ENCODE measurements at regions of chr2 and their contacts with region 1.

Region 1: GRCh38 chr2:133886735-133887660 is 318.7 kb upstream of the NCKAP5 start:
- ATAC-seq: peak; percentile 50 to 88 (median 77)
- H3K4me3 ChIP-seq: no peak overlapping the region
- H3K27ac ChIP-seq: no peak overlapping the region
- H3K4me1 ChIP-seq: peaks cover 3 to 6% of the 10 kb centered on the region in 2 donors

Region 2: DNA sequence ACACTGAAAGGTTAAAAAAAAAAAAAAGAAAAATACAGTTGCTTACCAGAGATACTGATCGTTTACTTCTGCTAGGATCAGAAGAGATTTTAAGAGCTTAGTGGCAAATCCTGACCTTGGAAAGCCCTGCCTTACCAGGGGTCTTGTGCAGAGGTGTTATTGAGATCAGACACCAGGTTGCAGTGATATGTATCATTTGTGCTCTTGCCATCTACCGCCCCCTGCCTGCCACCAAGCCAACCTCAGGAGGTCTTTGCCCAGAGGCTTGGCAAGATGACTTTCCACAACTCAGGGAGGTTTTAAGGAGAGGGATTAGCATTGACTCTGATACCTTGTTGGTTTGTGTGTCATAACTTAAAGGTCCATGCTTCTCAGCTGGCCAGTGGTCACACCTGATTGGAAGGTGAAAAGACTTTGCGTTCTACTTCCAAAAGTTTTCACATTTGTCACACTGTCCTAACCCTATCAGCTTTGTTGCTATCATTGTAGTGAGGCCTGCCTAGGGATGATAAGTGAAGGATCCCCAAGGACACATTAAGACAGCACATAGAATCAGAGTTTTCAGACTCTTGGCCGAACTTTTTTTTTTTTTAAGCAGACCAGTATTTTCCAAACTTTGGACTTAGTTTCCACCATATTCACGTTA is 320.7 kb after region 1 on chr2:
- in situ Hi-C with region 1: loop called in 1 of 9 experiments (anchors 25 kb)
- ATAC-seq: peak in 5 of 8 experiments; percentile 33 to 87 (median 82)
- H3K4me3 ChIP-seq: no peak overlapping the region
- H3K27ac ChIP-seq: no peak overlapping the region
- H3K4me1 ChIP-seq: peaks cover 11 to 14% of the 10 kb centered on the region in 2 donors

Region 3: DNA sequence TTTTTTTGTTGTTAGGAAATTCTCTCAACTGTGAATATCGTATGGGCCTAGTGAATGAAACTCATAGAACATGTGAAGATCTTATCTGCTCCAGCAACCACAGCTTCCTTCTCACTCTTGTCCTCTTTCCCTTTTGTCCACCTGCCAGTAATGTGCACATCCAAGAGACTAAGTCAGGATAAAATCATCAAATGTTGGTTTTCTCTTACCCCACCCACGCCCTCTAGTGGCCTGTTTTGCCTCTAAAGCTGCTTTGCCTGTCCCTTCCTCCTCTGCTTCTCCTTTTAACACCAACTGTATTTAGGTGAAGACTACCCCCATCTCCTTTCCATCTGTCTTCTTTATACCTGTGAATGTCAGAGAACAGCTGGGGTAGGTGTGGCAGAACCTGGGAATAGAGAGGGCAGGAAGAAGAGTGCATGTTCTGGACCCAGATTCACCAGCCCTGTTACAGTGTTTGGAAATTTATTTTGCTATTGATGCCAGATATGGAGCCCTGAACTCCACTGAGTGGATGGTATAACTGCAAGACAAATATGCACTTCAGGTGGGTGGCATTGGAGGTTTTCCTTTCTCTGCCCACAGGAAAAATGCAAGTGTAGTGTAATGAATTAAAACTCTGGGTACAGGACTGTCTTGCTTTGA is 358.5 kb after region 1 on chr2:
- in situ Hi-C with region 1: loop called in 1 of 9 experiments (anchors 25 kb)
- ATAC-seq: peak; percentile 35 to 76 (median 62)
- H3K4me3 ChIP-seq: no peak overlapping the region
- H3K27ac ChIP-seq: no peak overlapping the region
- H3K4me1 ChIP-seq: peaks cover 5 to 12% of the 10 kb centered on the region in 2 donors

Region 4: DNA sequence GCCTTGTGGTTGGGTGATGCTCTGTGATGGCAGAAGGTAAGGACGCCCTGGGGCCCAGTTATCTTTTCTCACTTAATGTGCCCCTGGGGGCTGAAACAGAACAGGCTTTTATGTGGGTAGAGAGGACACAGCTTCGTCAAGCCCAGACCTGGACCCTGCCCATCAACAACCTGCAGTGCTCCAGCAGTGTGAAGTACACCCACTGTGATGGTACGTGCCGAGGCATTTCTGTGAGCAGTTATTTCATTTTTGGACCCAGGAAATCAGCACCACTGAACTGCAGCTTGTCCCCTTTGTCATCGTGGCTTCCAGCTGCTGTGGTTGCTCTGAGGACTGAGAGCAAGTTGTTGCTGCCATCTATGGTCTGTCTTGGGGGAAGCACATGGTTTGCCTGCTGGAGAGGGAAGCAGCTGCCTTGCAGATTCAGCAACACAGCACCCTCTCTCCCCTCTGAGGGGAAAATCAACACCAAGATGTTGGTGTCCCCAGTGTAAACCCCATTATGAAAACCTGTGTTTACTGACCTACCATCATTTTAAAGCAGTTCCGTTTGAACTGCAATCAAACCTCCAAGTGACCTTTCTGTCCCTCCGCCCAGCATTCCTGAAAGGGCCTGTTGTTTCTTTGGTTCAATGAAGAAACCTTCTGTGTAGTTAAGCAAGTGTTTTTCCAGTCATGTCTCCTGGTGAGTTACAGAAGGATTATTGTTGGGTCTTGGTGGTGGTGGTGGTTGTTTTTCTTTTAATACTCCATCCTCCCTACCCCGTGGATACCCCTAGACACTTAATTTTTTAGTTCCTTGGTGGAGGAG is 525.0 kb after region 1 on chr2:
- in situ Hi-C with region 1: loop called in 1 of 9 experiments (anchors 25 kb)
- ATAC-seq: peak; percentile 80 to 99 (median 96)
- H3K4me3 ChIP-seq: no peak overlapping the region
- H3K27ac ChIP-seq: peak overlapping the region in 1 of 2 donors; percentile 36
- H3K4me1 ChIP-seq: peaks cover 9 to 10% of the 10 kb centered on the region in 2 donors

Region 5: DNA sequence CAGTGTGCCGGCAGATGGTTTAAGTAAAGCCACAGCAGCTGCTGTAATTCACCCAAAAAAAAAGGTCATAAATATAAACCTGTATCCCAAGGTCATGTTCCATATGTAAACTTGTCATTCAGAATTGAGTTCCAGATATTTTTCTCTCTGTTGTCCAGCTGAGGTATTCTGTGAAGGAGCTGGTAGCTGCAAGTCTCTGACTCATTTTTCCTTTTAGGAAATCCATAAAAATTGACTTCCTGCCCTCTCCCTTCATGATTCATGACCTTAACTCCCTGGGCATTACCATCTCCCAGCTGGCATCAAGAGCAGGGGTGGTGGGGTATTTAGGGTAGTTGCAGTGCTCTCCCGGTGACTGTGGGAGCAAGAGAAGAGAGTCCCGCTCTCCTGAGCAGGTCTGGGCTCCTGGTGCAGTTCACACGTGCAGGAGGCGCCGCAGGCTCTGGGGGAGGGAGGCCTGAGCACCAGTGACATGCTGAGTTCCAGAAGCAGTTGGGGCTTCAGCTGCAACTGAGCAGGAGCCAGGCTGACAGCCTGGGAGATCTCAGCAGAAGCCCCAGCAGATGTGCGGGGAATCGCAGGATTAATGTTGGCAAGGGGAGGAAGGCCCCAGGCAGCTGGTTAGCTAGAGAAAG is 559.5 kb after region 1 on chr2:
- in situ Hi-C with region 1: loop called in 1 of 9 experiments (anchors 25 kb)
- ATAC-seq: peak in 5 of 8 experiments; percentile 9 to 56 (median 44)
- H3K4me3 ChIP-seq: no peak overlapping the region
- H3K27ac ChIP-seq: peak overlapping the region; percentile 62 to 72
- H3K4me1 ChIP-seq: peaks cover 16 to 17% of the 10 kb centered on the region in 2 donors

Measured in motor neuron (in vitro differentiated cells).